GM12878 (cell line): ENCODE measurements at regions of chr7 and their contacts with region 1.

Region 1: GRCh38 chr7:29921404-29922010 is 68.1 kb downstream of the SCRN1 start:
- DNase-seq: peak; percentile 11
- ATAC-seq: peak; percentile 99
- H3K4me3 ChIP-seq: no peak overlapping the region
- H3K27ac ChIP-seq: no peak overlapping the region
- H3K4me1 ChIP-seq: no peaks in the 10 kb centered on the region
- H3K27me3 ChIP-seq: no peaks in the 10 kb centered on the region
- CTCF ChIP-seq: peak; percentile 83 to 98 (median 89)
- EP300 ChIP-seq: no peak
- POLR2A ChIP-seq: no peak
- RAD21 ChIP-seq: peak; percentile 83

Region 2: GRCh38 chr7:28926871-28927597 is 994.5 kb before region 1 on chr7:
- CTCF ChIA-PET with region 1: interaction called, 4 read pairs
- POLR2A ChIA-PET with region 1: no interaction called
- RAD21 ChIA-PET with region 1: no interaction called
- SMC1A ChIA-PET with region 1: no interaction called
- in situ Hi-C with region 1: no loop called
- intact Hi-C with region 1: loop called (anchors 10 kb)
- DNase-seq: peak; percentile 16
- ATAC-seq: peak; percentile 98
- H3K4me3 ChIP-seq: no peak overlapping the region
- H3K27ac ChIP-seq: no peak overlapping the region
- H3K4me1 ChIP-seq: peaks cover 5% of the 10 kb centered on the region; the same call in 1 of the 2 replicates
- H3K27me3 ChIP-seq: peaks cover 0 to 1% of the 10 kb centered on the region in 2 experiments; a peak in 1 of 4 replicates
- CTCF ChIP-seq: peak; percentile 66 to 83 (median 78)
- EP300 ChIP-seq: no peak
- POLR2A ChIP-seq: no peak
- RAD21 ChIP-seq: peak; percentile 67

Region 3: GRCh38 chr7:29839302-29839701 is 82.2 kb before region 1 on chr7:
- CTCF ChIA-PET with region 1: no interaction called
- POLR2A ChIA-PET with region 1: no interaction called
- RAD21 ChIA-PET with region 1: no interaction called
- SMC1A ChIA-PET with region 1: no interaction called
- in situ Hi-C with region 1: no loop called
- intact Hi-C with region 1: no loop called
- DNase-seq: no peak
- ATAC-seq: no peak
- H3K4me3 ChIP-seq: no peak overlapping the region
- H3K27ac ChIP-seq: no peak overlapping the region
- H3K4me1 ChIP-seq: no peaks in the 10 kb centered on the region
- H3K27me3 ChIP-seq: peaks cover 0 to 3% of the 10 kb centered on the region in 2 experiments; a peak in 2 of 4 replicates
- CTCF ChIP-seq: no peak
- EP300 ChIP-seq: no peak
- POLR2A ChIP-seq: no peak
- RAD21 ChIP-seq: no peak

Region 4: DNA sequence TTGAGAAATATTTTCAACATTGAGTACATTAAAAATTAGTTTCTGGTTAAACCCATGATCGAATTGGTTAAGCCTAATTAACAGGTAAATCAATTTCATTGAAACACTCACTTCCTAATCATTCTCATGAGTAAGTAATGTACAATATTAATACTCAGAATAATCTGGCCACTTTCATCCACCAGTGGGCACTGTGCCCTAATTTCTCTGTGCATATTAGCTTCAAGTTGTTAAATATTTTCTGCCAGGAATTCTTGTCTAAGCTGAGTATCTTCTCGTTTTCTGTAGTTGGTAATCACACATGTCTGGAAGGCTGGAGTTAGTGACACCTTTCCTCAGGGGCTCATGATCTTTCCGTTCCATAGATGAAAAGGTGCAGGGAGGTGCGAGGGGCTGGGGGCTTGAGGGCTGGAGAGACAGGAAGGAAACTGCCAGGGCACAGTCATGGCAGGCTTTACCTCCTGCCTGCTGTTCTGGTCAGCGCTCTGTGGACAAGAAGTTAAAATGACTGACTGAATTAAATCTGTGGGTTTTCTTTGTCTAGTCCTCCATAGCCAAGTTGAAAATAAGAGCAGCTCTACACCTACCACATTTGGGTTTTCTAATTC is 43.3 kb before region 1 on chr7:
- CTCF ChIA-PET with region 1: interaction called, 40 read pairs
- POLR2A ChIA-PET with region 1: no interaction called
- RAD21 ChIA-PET with region 1: interaction called, 3 read pairs
- SMC1A ChIA-PET with region 1: interaction called, 4 read pairs
- in situ Hi-C with region 1: no loop called
- intact Hi-C with region 1: loop called (anchors 5 kb)
- DNase-seq: no peak
- ATAC-seq: peak; percentile 77
- H3K4me3 ChIP-seq: no peak overlapping the region
- H3K27ac ChIP-seq: no peak overlapping the region
- H3K4me1 ChIP-seq: no peaks in the 10 kb centered on the region
- H3K27me3 ChIP-seq: no peaks in the 10 kb centered on the region; a peak in 2 of 4 replicates
- CTCF ChIP-seq: peak; percentile 53 to 65 (median 59)
- EP300 ChIP-seq: no peak
- POLR2A ChIP-seq: no peak
- RAD21 ChIP-seq: peak; percentile 66

Region 5: DNA sequence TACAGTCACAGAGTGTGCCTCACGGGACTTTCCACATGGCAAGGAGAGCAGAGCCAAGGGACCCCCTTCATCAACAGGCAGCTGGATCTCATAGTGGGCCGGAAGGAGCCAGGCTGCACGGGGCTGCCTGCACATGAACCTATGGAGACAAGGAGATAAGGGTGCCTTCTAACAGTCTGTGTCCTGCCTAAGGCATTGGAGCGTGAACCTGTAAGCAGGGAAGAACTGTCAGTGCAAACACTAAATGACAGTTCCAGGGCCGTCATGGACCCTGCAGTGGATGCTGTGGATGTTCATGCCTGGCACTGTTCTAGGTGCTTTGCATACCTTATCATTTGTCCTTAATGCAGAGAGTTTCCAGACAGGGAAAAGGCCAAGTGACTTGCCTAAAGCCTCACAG is 29.3 kb before region 1 on chr7:
- CTCF ChIA-PET with region 1: no interaction called
- POLR2A ChIA-PET with region 1: no interaction called
- RAD21 ChIA-PET with region 1: no interaction called
- SMC1A ChIA-PET with region 1: no interaction called
- in situ Hi-C with region 1: no loop called
- intact Hi-C with region 1: no loop called
- DNase-seq: no peak
- ATAC-seq: no peak
- H3K4me3 ChIP-seq: no peak overlapping the region
- H3K27ac ChIP-seq: no peak overlapping the region
- H3K4me1 ChIP-seq: no peaks in the 10 kb centered on the region
- H3K27me3 ChIP-seq: no peaks in the 10 kb centered on the region
- CTCF ChIP-seq: no peak
- EP300 ChIP-seq: no peak
- POLR2A ChIP-seq: no peak
- RAD21 ChIP-seq: no peak

Region 6: GRCh38 chr7:29935111-29935510 is 13.6 kb after region 1 on chr7:
- CTCF ChIA-PET with region 1: interaction called, 20 read pairs
- POLR2A ChIA-PET with region 1: interaction called, 4 read pairs
- RAD21 ChIA-PET with region 1: no interaction called
- SMC1A ChIA-PET with region 1: interaction called, 5 read pairs
- in situ Hi-C with region 1: no loop called
- intact Hi-C with region 1: no loop called
- DNase-seq: no peak
- ATAC-seq: no peak
- H3K4me3 ChIP-seq: no peak overlapping the region
- H3K27ac ChIP-seq: no peak overlapping the region
- H3K4me1 ChIP-seq: no peaks in the 10 kb centered on the region
- H3K27me3 ChIP-seq: no peaks in the 10 kb centered on the region
- CTCF ChIP-seq: no peak
- EP300 ChIP-seq: no peak
- POLR2A ChIP-seq: no peak
- RAD21 ChIP-seq: no peak

Region 7: GRCh38 chr7:29955799-29956486 is 34.4 kb after region 1 on chr7:
- CTCF ChIA-PET with region 1: interaction called, 16 read pairs
- POLR2A ChIA-PET with region 1: no interaction called
- RAD21 ChIA-PET with region 1: no interaction called
- SMC1A ChIA-PET with region 1: interaction called, 3 read pairs
- in situ Hi-C with region 1: no loop called
- intact Hi-C with region 1: no loop called
- DNase-seq: no peak
- ATAC-seq: peak; percentile 83
- H3K4me3 ChIP-seq: no peak overlapping the region
- H3K27ac ChIP-seq: peak overlapping the region; percentile 4
- H3K4me1 ChIP-seq: peaks cover 17% of the 10 kb centered on the region
- H3K27me3 ChIP-seq: no peaks in the 10 kb centered on the region
- CTCF ChIP-seq: no peak
- EP300 ChIP-seq: no peak
- POLR2A ChIP-seq: no peak
- RAD21 ChIP-seq: peak; percentile 33

Region 8: GRCh38 chr7:30178748-30179436 is 257.4 kb after region 1 on chr7:
- CTCF ChIA-PET with region 1: no interaction called
- POLR2A ChIA-PET with region 1: no interaction called
- RAD21 ChIA-PET with region 1: no interaction called
- SMC1A ChIA-PET with region 1: no interaction called
- in situ Hi-C with region 1: no loop called
- intact Hi-C with region 1: no loop called
- DNase-seq: peak; percentile 61
- ATAC-seq: peak; percentile 90
- H3K4me3 ChIP-seq: peak overlapping the region; percentile 45
- H3K27ac ChIP-seq: peak overlapping the region; percentile 87
- H3K4me1 ChIP-seq: peaks cover 25% of the 10 kb centered on the region
- H3K27me3 ChIP-seq: no peaks in the 10 kb centered on the region
- CTCF ChIP-seq: no peak
- EP300 ChIP-seq: no peak
- POLR2A ChIP-seq: no peak
- RAD21 ChIP-seq: no peak